ENCODE measurements at regions of chr6 and their contacts with region 1.

Region 1: DNA sequence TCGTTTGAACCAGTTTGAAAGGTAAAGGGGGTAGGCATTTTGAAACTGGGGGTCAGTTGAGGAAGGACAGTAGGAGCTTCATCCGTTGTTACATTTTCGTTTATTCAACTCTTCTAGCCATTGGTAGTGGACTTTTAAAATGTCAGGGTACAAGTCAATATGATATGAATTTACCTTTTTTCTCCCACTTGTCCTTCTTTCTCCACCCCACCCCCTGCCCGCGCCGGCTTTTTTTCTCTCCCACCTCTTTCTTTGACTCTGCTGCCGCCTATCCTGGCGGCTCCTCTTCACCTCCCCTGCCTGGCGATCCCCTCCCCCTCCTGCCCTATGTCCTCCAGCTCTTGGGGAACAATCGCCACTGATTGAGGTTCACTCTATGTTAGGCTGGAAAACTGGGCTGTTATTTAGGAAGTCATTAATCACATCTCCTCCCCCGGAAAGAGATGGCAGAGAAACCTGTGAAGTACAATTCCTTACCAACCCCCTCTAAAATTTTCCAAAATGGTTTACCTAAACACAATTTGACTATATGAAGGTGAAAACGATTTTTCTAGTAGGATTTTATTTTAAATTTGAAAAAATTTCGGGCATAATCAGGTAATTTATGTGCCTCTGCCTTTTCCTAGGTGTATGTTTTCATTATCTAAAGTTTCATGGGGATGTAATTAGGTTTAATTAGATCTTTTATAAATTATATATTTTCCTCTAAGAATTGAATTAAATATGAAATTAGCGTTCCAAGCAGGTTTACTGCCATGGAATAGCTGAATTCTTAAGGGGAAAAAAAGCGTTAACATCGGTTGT is 778 bp upstream of the LIN28B start:
- DNase-seq: no peak
- ATAC-seq: peak; percentile 57
- H3K4me3 ChIP-seq: peak overlapping the region; percentile 71 to 86
- H3K27ac ChIP-seq: peak overlapping the region; percentile 97
- H3K4me1 ChIP-seq: peaks cover 15% of the 10 kb centered on the region
- H3K27me3 ChIP-seq: no peaks in the 10 kb centered on the region; the same call in 1 of the 2 replicates
- CTCF ChIP-seq: peak; percentile 52

Region 2: DNA sequence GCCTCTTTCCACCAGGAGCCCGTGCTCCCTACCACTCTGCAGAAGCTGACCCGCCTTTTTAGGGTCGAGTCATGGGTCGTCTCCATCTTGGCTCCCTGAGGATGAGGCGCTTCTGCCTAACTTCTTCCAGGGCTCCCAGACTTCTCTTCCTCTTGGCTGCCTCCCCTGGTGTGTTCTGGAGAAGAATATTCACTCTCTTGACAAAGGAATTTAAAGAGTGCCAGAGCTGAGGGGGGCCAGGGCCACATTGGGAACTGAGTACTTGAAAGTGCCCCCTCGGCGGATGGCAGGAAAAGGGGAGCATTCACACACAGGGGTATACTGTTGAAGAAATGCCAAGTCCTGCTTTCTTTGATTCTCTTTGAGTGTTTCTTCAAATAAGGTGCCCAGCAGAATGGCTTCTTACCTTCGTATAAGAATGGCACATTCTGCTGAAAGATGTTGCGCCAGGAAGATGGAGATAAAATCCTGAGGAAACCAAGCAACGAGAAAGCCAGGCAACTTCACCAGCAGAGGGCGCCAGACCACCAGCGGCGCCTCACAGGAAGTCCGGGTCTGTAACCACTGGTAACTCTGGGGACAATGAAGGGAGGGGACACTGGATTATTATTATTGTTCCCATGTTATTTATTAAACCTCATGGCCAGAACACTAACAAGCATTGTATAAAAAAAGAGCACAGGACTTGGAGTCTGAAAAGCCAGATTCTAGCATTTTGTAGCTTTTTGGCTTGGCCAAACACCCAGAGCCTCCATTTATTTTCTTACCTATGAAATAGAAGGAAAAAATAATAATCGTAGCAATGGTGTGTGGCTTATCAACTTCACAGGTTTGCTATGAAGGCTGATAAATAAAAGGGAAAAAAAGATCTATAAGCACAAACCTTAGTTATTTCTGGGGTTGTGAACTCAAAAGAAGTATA is 273.1 kb before region 1 on chr6:
- CTCF ChIA-PET with region 1: no interaction called
- POLR2A ChIA-PET with region 1: no interaction called
- in situ Hi-C with region 1: no loop called
- intact Hi-C with region 1: no loop called
- DNase-seq: no peak
- ATAC-seq: no peak
- H3K4me3 ChIP-seq: no peak overlapping the region
- H3K27ac ChIP-seq: 0 out of 2 replicates have a peak overlapping the region, but pooled peaks have one; percentile 27
- H3K4me1 ChIP-seq: no peaks in the 10 kb centered on the region; the same call in 1 of the 2 replicates
- H3K27me3 ChIP-seq: no peaks in the 10 kb centered on the region
- CTCF ChIP-seq: peak; percentile 94

Region 3: DNA sequence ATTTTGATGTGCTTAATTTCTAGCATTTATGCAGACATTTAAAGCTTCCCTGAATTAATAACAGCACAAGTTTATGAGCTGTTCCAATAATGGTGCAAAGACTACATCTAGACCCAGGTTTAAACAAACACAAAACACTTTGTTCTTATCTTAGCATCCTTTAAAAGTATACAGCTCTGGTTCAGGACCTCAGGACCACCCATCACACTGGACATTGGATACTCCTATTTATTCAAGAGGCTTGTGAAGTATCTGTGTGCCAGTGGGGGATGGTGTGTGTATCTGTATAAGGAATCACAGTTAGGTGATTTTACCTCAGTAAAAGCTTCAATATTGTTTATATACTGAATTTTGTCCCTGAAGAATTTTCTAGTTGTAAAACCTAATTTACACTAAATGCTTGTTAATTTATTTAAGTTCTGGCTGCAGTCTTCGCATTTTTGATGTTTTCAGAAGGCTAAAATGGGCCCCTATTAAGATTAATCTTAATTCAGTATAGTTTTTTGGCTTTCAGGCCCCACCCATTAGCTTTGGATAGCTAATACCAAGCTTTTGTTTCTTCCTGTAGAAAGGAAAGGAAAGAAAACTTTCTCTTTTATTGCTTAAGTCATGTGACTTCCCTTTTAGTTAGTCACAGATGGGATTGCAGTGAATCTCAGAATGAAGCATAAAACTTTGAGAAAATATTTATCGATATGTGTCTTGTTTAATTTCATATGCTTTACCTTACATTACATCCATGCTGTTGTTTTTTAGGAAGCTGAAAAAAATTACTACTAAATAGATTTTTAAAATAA is 13.9 kb after region 1 on chr6:
- CTCF ChIA-PET with region 1: interaction called, 3 read pairs
- POLR2A ChIA-PET with region 1: interaction called, 18 read pairs
- in situ Hi-C with region 1: no loop called
- intact Hi-C with region 1: no loop called
- DNase-seq: no peak
- ATAC-seq: peak; percentile 51; the same call in 1 of the 2 replicates
- H3K4me3 ChIP-seq: no peak overlapping the region
- H3K27ac ChIP-seq: peak overlapping the region; percentile 54
- H3K4me1 ChIP-seq: peaks cover 16% of the 10 kb centered on the region
- H3K27me3 ChIP-seq: no peaks in the 10 kb centered on the region
- CTCF ChIP-seq: no peak

Region 4: GRCh38 chr6:105317607-105318533 is 361.7 kb after region 1 on chr6:
- CTCF ChIA-PET with region 1: no interaction called
- POLR2A ChIA-PET with region 1: interaction called, 23 read pairs
- in situ Hi-C with region 1: no loop called
- intact Hi-C with region 1: no loop called
- DNase-seq: peak; percentile 13
- ATAC-seq: no peak
- H3K4me3 ChIP-seq: no peak overlapping the region
- H3K27ac ChIP-seq: no peak overlapping the region
- H3K4me1 ChIP-seq: no peaks in the 10 kb centered on the region
- H3K27me3 ChIP-seq: no peaks in the 10 kb centered on the region
- CTCF ChIP-seq: peak; percentile 74